ENCODE measurements at regions of chr22 and their contacts with region 1.

Region 1: GRCh38 chr22:41940832-41941765 is 5.9 kb downstream of the CENPM start:
- DNase-seq: peak; percentile 84 to 93 (median 92)
- ATAC-seq: peak; percentile 86 to 90
- H3K4me3 ChIP-seq: no peak overlapping the region
- H3K27ac ChIP-seq: no peak overlapping the region
- H3K4me1 ChIP-seq: peaks cover 2% of the 10 kb centered on the region
- H3K27me3 ChIP-seq: no peaks in the 10 kb centered on the region

Region 2: DNA sequence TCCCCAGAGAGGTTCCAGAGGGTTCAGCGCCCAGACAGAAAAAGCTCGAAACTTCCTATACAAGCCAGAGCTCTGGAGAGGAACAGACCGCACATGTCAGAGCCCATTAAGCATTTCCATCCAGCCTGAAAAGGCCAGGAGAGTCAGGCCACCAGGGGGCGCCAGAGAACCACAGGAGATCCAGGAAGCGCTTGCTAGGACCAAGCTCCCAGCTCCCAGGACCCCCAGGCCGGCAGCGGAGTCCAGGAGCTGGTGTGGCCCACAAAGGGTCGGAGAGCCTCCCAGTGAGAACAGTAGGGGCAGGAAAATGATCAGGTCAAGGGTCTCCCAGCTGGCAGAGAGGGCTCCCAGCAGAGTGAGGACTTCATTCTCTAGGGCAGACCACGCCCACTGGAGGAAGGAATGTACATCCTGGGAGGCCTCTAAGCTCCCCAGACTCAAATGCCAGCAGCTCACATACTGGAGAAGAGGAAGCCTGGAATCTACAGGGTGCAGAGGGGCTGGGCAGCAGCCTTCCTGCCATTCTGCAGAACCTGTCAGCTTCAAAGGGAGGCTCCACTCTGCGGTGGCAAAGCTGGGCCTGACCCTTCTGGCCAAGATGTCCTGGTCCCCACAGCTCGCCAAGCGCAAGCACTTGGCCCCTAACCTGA is 243.8 kb before region 1 on chr22:
- intact Hi-C with region 1: loop called (anchors 2 to 5 kb)
- DNase-seq: peak; percentile 92 to 98 (median 96)
- ATAC-seq: peak; percentile 78 to 85
- H3K4me3 ChIP-seq: peak overlapping the region; percentile 33
- H3K27ac ChIP-seq: peak overlapping the region; percentile 37
- H3K4me1 ChIP-seq: no peaks in the 10 kb centered on the region
- H3K27me3 ChIP-seq: no peaks in the 10 kb centered on the region

Region 3: DNA sequence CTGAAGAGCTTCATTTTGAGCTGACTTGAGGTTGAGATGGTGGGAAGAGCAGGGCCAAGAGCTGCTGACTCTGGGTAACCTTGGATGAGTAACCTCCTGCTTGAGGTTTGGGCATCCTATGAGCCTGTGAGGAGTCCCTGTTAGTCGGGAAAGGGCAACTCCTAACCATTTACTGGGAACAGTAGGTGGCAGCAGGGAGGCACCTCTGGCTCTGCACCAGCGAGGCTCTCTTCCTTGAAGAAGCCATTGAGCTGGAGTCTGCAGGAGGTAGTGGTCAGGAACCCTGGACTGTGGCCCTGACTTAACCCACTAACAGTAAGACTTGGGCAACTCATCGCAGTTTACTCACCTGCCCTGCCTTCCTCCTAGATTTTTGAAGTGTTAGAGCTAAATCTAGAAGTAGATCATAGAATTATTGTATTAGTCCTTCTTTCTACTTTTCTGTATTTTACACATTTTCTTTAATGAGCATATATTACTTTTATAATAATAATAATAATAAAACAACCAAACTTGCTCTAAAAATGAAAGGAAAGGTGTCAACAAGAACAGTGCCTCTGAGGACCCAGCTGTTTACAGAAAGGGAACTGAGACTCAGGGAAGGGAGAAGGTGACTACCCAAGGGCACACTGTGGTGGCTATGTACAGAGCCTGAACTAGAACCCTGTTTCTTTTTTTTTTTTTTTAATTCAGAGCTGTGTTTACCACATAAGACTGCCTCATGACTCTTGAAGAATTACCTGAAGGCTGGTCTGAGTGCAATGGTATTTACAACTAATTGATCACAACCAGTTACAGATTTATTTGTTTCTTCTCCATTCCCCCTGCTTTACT is 194.3 kb before region 1 on chr22:
- intact Hi-C with region 1: loop called in 3 of 4 experiments (anchors 5 kb)
- DNase-seq: peak; percentile 63 to 82 (median 75)
- ATAC-seq: peak; percentile 87 to 91
- H3K4me3 ChIP-seq: no peak overlapping the region
- H3K27ac ChIP-seq: no peak overlapping the region
- H3K4me1 ChIP-seq: no peaks in the 10 kb centered on the region
- H3K27me3 ChIP-seq: no peaks in the 10 kb centered on the region

Region 4: GRCh38 chr22:41822317-41823060 is 118.6 kb before region 1 on chr22:
- intact Hi-C with region 1: loop called (anchors 2 to 5 kb)
- DNase-seq: no peak
- ATAC-seq: peak in 1 of 2 donors; percentile 4
- H3K4me3 ChIP-seq: no peak overlapping the region
- H3K27ac ChIP-seq: no peak overlapping the region
- H3K4me1 ChIP-seq: peaks cover 18% of the 10 kb centered on the region
- H3K27me3 ChIP-seq: no peaks in the 10 kb centered on the region